ENCODE measurements at regions of chr12 and their contacts with region 1.

Region 1: GRCh38 chr12:121668750-121669520 is 519 bp downstream of the MORN3 start:
- DNase-seq: peak; percentile 68
- H3K4me3 Mint-ChIP-seq: no peak overlapping the region
- H3K27ac Mint-ChIP-seq: peak overlapping the region; percentile 62
- H3K4me1 Mint-ChIP-seq: peaks cover 51% of the 10 kb centered on the region
- H3K27me3 Mint-ChIP-seq: no peaks in the 10 kb centered on the region

Region 2: DNA sequence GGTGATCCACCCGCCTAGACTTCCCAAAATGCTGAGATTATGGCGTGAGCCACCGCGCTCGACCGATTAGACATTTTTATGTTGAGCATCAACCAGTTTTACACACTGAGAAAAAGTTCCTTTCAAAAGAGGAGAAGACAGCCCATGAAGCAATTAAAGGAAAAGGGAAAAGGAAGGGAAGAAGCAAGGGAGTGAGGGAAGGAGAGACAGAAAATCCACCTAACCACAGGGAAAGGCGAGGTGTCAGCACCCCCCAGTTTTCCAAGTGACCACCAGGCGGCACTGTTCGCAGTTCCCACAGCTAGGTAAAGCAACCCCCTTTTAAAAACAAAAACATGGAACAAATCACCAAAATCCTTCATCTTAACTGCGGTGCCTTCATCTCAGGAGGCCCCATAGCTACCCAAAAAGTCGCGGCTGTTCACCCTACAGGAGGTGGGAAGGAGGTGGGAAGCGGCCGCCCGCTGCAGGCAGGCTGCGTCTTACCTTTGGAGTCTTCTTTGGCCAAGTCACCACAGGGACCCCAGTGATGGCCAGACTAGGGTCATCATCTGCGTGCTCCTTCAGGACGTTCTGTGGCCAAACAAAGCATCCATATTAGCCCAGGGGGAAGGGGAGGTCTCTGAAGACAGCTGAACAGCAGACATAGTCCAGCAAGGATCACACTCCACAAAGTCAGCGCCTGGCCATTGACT is 174.7 kb before region 1 on chr12:
- CTCF ChIA-PET with region 1: interaction called, 38 read pairs
- POLR2A ChIA-PET with region 1: no interaction called
- intact Hi-C with region 1: no loop called
- DNase-seq: peak; percentile 72
- H3K4me3 Mint-ChIP-seq: no peak overlapping the region
- H3K27ac Mint-ChIP-seq: no peak overlapping the region
- H3K4me1 Mint-ChIP-seq: peaks cover 3% of the 10 kb centered on the region
- H3K27me3 Mint-ChIP-seq: no peaks in the 10 kb centered on the region

Region 3: GRCh38 chr12:121536899-121537813 is 131.8 kb before region 1 on chr12:
- CTCF ChIA-PET with region 1: no interaction called
- POLR2A ChIA-PET with region 1: interaction called, 7 read pairs
- intact Hi-C with region 1: loop called (anchors 2 kb)
- DNase-seq: peak; percentile 83
- H3K4me3 Mint-ChIP-seq: peak overlapping the region; percentile 70
- H3K27ac Mint-ChIP-seq: peak overlapping the region; percentile 60
- H3K4me1 Mint-ChIP-seq: peaks cover 43% of the 10 kb centered on the region
- H3K27me3 Mint-ChIP-seq: no peaks in the 10 kb centered on the region

Region 4: GRCh38 chr12:121590476-121591143 is 78.3 kb before region 1 on chr12:
- CTCF ChIA-PET with region 1: interaction called, 4 read pairs
- POLR2A ChIA-PET with region 1: no interaction called
- intact Hi-C with region 1: loop called (anchors 1 kb)
- DNase-seq: peak; percentile 80
- H3K4me3 Mint-ChIP-seq: peak overlapping the region; percentile 82
- H3K27ac Mint-ChIP-seq: peak overlapping the region; percentile 98
- H3K4me1 Mint-ChIP-seq: peaks cover 26% of the 10 kb centered on the region
- H3K27me3 Mint-ChIP-seq: no peaks in the 10 kb centered on the region

Region 5: GRCh38 chr12:121678716-121679580 is 10.0 kb after region 1 on chr12:
- CTCF ChIA-PET with region 1: interaction called, 14 read pairs
- POLR2A ChIA-PET with region 1: no interaction called
- intact Hi-C with region 1: no loop called
- DNase-seq: no peak
- H3K4me3 Mint-ChIP-seq: no peak overlapping the region
- H3K27ac Mint-ChIP-seq: no peak overlapping the region
- H3K4me1 Mint-ChIP-seq: peaks cover 9% of the 10 kb centered on the region
- H3K27me3 Mint-ChIP-seq: no peaks in the 10 kb centered on the region

Region 6: GRCh38 chr12:121741743-121742142 is 72.8 kb after region 1 on chr12:
- CTCF ChIA-PET with region 1: no interaction called
- POLR2A ChIA-PET with region 1: no interaction called
- intact Hi-C with region 1: no loop called
- DNase-seq: no peak
- H3K4me3 Mint-ChIP-seq: no peak overlapping the region
- H3K27ac Mint-ChIP-seq: no peak overlapping the region
- H3K4me1 Mint-ChIP-seq: no peaks in the 10 kb centered on the region
- H3K27me3 Mint-ChIP-seq: no peaks in the 10 kb centered on the region

Region 7: DNA sequence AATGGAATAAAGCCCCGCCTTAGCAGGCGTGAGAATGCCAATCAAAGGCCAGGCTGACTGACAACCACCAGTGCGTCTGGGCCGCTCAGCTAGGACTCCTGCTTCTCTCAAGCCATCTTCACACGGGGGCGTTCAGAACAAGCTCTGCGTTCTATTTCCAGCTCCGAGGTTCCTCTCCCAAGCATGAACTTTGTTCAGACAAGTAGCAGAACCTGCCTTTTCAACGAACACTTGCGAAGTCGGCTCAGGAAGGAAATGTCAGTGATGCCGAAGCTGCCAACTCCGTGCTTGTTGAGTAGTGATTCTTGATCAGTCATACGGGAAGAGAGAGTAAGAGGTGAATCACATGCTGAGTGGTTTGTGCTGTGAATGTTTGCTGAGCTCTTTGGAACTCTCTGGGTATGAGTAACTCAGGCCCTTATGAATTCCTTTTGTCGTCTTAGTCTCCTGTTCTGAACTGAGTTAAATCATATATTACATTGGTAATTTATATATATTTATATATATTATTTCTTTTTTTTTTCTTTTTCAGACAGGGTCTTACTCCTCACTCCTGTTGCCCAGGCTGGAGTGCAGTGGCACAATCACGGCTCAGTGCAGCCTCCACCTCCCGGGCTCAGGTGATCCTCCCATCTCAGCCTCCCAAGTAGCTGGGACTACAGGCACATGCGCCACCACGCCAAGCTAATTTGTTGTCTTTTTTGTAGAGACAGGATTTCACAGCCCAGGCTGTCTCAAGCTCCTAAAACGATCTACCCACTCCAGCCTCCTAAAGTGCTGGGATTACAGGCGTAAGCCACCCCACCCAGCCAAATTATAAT is 323.3 kb after region 1 on chr12:
- CTCF ChIA-PET with region 1: no interaction called
- POLR2A ChIA-PET with region 1: no interaction called
- intact Hi-C with region 1: no loop called
- DNase-seq: peak; percentile 85
- H3K4me3 Mint-ChIP-seq: peak overlapping the region; percentile 38
- H3K27ac Mint-ChIP-seq: peak overlapping the region; percentile 84
- H3K4me1 Mint-ChIP-seq: peaks cover 20% of the 10 kb centered on the region
- H3K27me3 Mint-ChIP-seq: peaks cover 3% of the 10 kb centered on the region